Caco-2 (cell line): ENCODE measurements at regions of chr22 and their contacts with region 1.

Region 1: DNA sequence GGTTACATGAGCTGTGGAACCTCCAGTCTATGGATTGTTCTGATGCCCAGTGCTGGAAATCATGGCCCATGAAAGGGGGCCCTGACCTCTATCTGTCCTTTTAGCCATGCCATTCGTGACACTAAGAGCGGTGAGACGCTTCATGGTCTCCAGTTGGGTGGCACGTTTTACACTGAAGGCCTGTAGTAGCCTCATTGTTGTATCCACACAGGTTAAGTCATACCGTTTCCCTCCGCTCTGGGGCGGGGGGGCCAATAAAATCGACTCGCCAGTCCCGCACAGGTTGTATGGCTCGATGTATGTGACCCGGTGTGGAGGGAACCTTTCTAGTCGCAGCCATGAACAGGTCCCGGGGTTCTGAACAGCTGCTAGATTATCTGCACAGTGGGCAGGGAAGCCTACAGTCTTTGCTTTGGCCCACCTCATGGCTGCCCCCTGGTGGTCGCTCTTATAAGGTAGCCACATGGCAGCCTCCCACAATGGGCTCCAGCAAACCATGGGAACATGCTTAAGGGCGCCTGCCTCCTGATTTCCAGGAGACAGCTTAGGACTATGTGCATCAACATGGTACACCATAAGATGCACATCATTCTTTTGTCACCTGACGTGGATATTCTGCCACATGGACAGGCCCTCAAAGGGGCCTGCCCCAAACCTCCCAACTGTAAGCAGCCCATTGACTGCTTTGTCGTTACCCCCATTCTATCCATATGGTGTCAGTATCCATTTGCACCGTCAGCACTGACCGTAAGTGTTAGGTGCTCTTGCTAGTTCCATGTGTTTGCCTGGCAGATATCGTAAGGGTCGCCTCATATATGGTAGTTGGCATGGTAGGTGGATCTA is 19.7 kb upstream of the APOL3 start:
- DNase-seq: peak; percentile 68 to 82
- H3K4me3 ChIP-seq: no peak overlapping the region
- H3K4me3 Mint-ChIP-seq: no peak overlapping the region
- H3K27ac Mint-ChIP-seq: no peak overlapping the region
- H3K4me1 ChIP-seq: no peaks in the 10 kb centered on the region
- H3K4me1 Mint-ChIP-seq: no peaks in the 10 kb centered on the region
- H3K27me3 ChIP-seq: no peaks in the 10 kb centered on the region
- H3K27me3 Mint-ChIP-seq: no peaks in the 10 kb centered on the region
- CTCF ChIP-seq: peak; percentile 75 to 77

Region 2: DNA sequence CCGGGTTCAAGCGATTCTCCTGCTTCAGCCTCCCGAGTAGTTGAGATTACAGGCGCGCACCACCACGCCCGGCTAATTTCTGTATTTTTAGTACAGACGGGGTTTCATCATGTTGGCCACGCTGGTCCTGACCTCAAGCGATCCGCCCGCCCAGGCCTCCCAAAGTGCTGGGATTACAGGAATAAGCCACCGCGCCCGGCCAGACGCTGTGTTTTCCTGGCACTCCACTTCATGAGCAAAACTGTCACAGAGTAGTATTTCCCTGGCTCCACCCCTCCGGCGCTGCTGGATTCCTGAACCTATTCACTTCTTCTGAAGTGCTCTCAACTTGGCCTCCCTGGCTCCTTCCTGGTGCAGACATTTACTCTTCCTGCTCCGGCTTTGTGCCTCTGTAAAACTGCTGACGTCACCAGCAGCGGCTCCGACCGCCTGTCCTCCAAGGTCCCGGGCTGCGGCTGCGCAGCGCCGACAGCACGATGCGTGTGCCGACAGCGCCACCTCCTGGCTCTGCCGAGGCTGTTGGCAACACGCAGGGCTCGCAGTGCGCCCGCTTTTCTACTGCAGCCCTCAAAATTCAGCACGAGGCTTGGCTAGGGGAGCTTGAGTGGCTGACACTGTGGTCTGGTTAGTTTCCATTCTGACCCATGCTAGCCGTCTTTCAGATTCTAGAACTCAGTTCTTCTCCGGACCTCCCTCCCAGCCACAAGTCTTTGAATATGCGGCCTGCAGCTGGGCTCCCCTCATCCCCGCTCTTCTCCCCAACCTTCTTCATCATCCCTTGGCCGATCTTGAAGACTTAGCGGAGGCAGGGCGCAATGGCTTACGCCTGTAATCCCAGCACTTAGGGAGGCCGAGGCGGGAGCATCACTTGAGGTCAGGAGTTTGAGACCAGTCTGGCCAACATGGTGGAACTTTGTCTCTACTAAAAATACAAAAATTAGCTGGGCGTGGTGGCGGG is 56.3 kb before region 1 on chr22:
- CTCF ChIA-PET with region 1: no interaction called
- POLR2A ChIA-PET with region 1: no interaction called
- intact Hi-C with region 1: no loop called
- DNase-seq: peak; percentile 92 to 94
- H3K4me3 ChIP-seq: peak overlapping the region; percentile 25
- H3K4me3 Mint-ChIP-seq: peak overlapping the region; percentile 63
- H3K27ac Mint-ChIP-seq: peak overlapping the region; percentile 85
- H3K4me1 ChIP-seq: 0 out of 2 replicates have a peak, but pooled peaks cover 3% of the 10 kb centered on the region
- H3K4me1 Mint-ChIP-seq: peaks cover 7% of the 10 kb centered on the region
- H3K27me3 ChIP-seq: no peaks in the 10 kb centered on the region
- H3K27me3 Mint-ChIP-seq: peaks cover 9% of the 10 kb centered on the region
- CTCF ChIP-seq: peak; percentile 92 to 97

Region 3: GRCh38 chr22:36144886-36145541 is 35.2 kb before region 1 on chr22:
- CTCF ChIA-PET with region 1: interaction called, 15 read pairs
- POLR2A ChIA-PET with region 1: no interaction called
- intact Hi-C with region 1: loop called (anchors 1 kb)
- DNase-seq: peak; percentile 69 to 70
- H3K4me3 ChIP-seq: no peak overlapping the region
- H3K4me3 Mint-ChIP-seq: no peak overlapping the region
- H3K27ac Mint-ChIP-seq: no peak overlapping the region
- H3K4me1 ChIP-seq: no peaks in the 10 kb centered on the region
- H3K4me1 Mint-ChIP-seq: no peaks in the 10 kb centered on the region
- H3K27me3 ChIP-seq: no peaks in the 10 kb centered on the region
- H3K27me3 Mint-ChIP-seq: no peaks in the 10 kb centered on the region
- CTCF ChIP-seq: peak; percentile 71 to 77